ENCODE measurements at regions of chr11 and their contacts with region 1.

Region 1: DNA sequence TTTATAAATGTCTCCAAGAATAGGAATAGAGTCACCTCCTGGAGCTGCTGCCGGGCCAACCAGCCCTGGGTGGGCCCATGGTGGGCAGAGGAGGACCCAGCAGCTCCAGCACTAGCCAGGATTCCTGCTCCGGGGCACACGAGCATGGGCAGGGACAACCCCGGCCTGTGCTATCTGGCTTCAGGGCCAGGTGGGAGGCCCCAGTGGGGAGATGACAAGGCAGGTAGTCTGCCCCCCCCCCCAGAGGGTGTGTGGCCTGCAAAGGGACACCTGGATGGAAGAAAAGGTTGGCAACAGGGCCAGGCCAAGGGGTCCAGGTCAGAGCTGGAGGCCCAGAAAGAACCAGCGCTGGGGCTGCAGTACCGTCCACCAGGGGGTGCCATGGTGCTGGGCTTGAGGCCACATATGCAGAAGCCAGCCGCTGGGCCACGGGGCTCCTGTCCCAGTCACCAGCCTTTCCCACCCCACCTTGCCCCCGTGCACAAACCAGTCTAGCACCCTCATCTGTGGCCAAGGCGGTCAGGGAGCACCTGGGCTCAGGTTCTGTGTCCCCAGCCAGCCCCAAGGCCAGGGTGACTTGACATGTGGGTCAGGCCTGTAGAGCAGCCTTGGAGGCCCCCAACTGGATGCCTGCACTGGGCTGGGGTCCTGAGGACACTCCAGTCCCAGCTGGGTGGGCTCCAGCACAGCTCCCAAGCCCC is 3.5 kb downstream of the TSPAN32 start:
- DNase-seq: peak; percentile 38 to 96
- H3K4me3 ChIP-seq: no peak overlapping the region
- H3K27ac ChIP-seq: no peak overlapping the region
- H3K4me1 ChIP-seq: peaks cover 0 to 3% (median 0%) of the 10 kb centered on the region in 4 experiments; a peak in 1 of 7 replicates
- H3K27me3 ChIP-seq: no peaks in the 10 kb centered on the region
- CTCF ChIP-seq: peak; percentile 89 to 94 (median 94)
- EP300 ChIP-seq: no peak
- POLR2A ChIP-seq: no peak
- RAD21 ChIP-seq: peak; percentile 89 to 91

Region 2: DNA sequence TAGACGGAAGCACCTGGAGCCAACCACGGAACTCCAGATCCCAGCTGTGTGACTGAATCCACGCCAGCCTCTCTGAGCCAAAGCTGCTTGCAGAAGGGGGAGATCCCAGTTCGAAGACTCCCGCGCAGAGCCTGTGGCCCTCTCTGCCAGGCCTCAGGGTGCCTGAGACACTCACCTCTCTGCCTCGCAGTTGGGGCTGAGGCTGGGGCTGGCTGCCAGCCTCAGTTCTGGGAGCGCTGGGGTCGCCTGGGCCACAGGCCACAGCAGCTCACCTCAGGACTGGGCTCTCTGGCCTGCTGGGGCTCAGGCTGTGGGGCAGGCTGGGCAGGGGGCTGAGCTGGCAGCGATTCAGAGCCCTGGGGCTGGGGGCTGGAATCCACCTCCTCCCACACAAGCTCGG is 157.9 kb before region 1 on chr11:
- CTCF ChIA-PET with region 1: no interaction called
- POLR2A ChIA-PET with region 1: no interaction called
- DNase-seq: no peak
- H3K4me3 ChIP-seq: no peak overlapping the region
- H3K27ac ChIP-seq: no peak overlapping the region
- H3K4me1 ChIP-seq: peaks cover 0 to 7% (median 5%) of the 10 kb centered on the region in 4 experiments; a peak in 5 of 7 replicates
- H3K27me3 ChIP-seq: peaks cover 60 to 77% (median 73%) of the 10 kb centered on the region in 4 experiments
- CTCF ChIP-seq: no peak
- EP300 ChIP-seq: no peak
- POLR2A ChIP-seq: no peak
- RAD21 ChIP-seq: no peak

Region 3: GRCh38 chr11:2186669-2187279 is 118.5 kb before region 1 on chr11:
- CTCF ChIA-PET with region 1: interaction called, 116 read pairs
- POLR2A ChIA-PET with region 1: no interaction called
- DNase-seq: peak in 1 of 2 experiments; percentile 69
- H3K4me3 ChIP-seq: no peak overlapping the region
- H3K27ac ChIP-seq: no peak overlapping the region
- H3K4me1 ChIP-seq: no peaks in the 10 kb centered on the region; a peak in 2 of 7 replicates
- H3K27me3 ChIP-seq: peaks cover 0 to 16% (median 5%) of the 10 kb centered on the region in 4 experiments; a peak in 2 of 7 replicates
- CTCF ChIP-seq: peak; percentile 66 to 75 (median 69)
- EP300 ChIP-seq: no peak
- POLR2A ChIP-seq: no peak
- RAD21 ChIP-seq: peak; percentile 62 to 77

Region 4: GRCh38 chr11:2237457-2238238 is 67.6 kb before region 1 on chr11:
- CTCF ChIA-PET with region 1: no interaction called
- POLR2A ChIA-PET with region 1: no interaction called
- DNase-seq: no peak
- H3K4me3 ChIP-seq: no peak overlapping the region
- H3K27ac ChIP-seq: no peak overlapping the region
- H3K4me1 ChIP-seq: peaks cover 0 to 4% (median 2%) of the 10 kb centered on the region in 4 experiments; a peak in 2 of 7 replicates
- H3K27me3 ChIP-seq: 0 out of 7 replicates have a peak, but pooled peaks cover 0 to 2% (median under 1%) of the 10 kb centered on the region in 4 experiments
- CTCF ChIP-seq: no peak
- EP300 ChIP-seq: no peak
- POLR2A ChIP-seq: no peak
- RAD21 ChIP-seq: no peak

Region 5: DNA sequence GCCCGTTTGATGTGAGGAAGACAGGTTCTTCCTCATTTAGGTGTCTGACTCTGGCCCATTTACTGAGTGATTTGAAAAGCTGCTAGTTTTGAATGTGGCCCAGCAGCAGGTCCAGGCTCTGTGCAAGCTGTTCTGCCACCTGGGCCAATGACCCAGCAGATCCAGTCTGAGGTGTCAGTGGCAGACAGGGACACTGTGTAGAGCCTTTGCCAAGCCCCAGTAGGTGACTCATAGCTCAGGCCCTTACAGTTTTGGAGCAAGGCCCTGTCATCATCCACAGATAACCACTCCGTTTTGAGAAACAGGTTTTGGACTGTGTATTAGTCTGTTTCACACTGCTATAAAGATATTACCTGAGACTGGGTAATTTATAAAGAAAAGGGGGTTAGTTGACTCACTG is 20.4 kb after region 1 on chr11:
- CTCF ChIA-PET with region 1: interaction called, 11 read pairs
- POLR2A ChIA-PET with region 1: no interaction called
- DNase-seq: no peak
- H3K4me3 ChIP-seq: no peak overlapping the region
- H3K27ac ChIP-seq: no peak overlapping the region
- H3K4me1 ChIP-seq: no peaks in the 10 kb centered on the region
- H3K27me3 ChIP-seq: no peaks in the 10 kb centered on the region
- CTCF ChIP-seq: no peak
- EP300 ChIP-seq: no peak
- POLR2A ChIP-seq: no peak
- RAD21 ChIP-seq: no peak

Region 6: GRCh38 chr11:2390725-2391151 is 85.4 kb after region 1 on chr11:
- CTCF ChIA-PET with region 1: interaction called, 21 read pairs
- POLR2A ChIA-PET with region 1: no interaction called
- DNase-seq: peak in 1 of 2 experiments; percentile 56
- H3K4me3 ChIP-seq: no peak overlapping the region
- H3K27ac ChIP-seq: no peak overlapping the region
- H3K4me1 ChIP-seq: peaks cover 0 to 15% (median 11%) of the 10 kb centered on the region in 4 experiments; a peak in 5 of 7 replicates
- H3K27me3 ChIP-seq: no peaks in the 10 kb centered on the region
- CTCF ChIP-seq: no peak
- EP300 ChIP-seq: no peak
- POLR2A ChIP-seq: no peak
- RAD21 ChIP-seq: no peak

Region 7: GRCh38 chr11:2420502-2421225 is 115.4 kb after region 1 on chr11:
- CTCF ChIA-PET with region 1: interaction called, 333 read pairs
- POLR2A ChIA-PET with region 1: interaction called, 10 read pairs
- DNase-seq: peak; percentile 65 to 85
- H3K4me3 ChIP-seq: no peak overlapping the region
- H3K27ac ChIP-seq: no peak overlapping the region
- H3K4me1 ChIP-seq: peaks cover 0 to 5% (median under 1%) of the 10 kb centered on the region in 4 experiments; a peak in 2 of 7 replicates
- H3K27me3 ChIP-seq: peaks cover 0 to 3% (median 0%) of the 10 kb centered on the region in 4 experiments; a peak in 2 of 7 replicates
- CTCF ChIP-seq: peak in 2 of 3 experiments; percentile 94 to 97; a peak in 3 of 4 replicates
- EP300 ChIP-seq: no peak
- POLR2A ChIP-seq: no peak
- RAD21 ChIP-seq: peak; percentile 92 to 95

Region 8: GRCh38 chr11:3380706-3381545 is 1075.6 kb after region 1 on chr11:
- CTCF ChIA-PET with region 1: no interaction called
- POLR2A ChIA-PET with region 1: no interaction called
- DNase-seq: peak; percentile 43 to 74
- H3K4me3 ChIP-seq: peak overlapping the region; percentile 69 to 96 (median 79)
- H3K27ac ChIP-seq: peak overlapping the region; percentile 38; the same call in 1 of the 2 replicates
- H3K4me1 ChIP-seq: peaks cover 6 to 22% (median 13%) of the 10 kb centered on the region in 4 experiments; a peak in 5 of 7 replicates
- H3K27me3 ChIP-seq: no peaks in the 10 kb centered on the region
- CTCF ChIP-seq: no peak
- EP300 ChIP-seq: no peak
- POLR2A ChIP-seq: peak; percentile 61 to 94
- RAD21 ChIP-seq: no peak